WTC11 (cell line): ENCODE measurements at regions of chr17 and their contacts with region 1.

Region 1: DNA sequence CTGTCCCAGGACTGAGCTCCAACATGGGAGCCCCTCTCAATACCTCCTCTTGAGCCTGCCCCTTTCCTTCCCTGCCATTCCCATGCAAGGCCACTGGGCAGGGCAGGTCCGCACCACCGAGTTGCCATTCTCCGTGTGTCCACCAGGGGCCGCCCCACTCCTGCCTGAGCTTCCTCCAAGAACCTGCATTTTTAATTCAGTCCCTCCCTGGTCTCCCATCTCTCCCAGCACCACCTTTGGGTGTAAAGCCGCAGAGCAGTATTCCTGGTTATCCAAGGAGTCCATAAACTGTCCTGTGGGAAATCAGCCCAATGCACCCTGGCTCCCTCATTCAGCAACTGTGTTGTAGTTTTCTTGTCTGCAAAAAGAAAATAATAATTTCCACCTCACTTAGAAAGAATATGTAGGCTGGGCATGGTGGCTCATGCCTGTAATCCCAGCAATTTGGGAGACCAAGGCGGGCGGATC is 15.9 kb upstream of the ANKRD40CL start:
- DNase-seq: peak; percentile 95
- ATAC-seq: peak; percentile 99
- H3K4me3 Mint-ChIP-seq: no peak overlapping the region
- H3K27ac Mint-ChIP-seq: no peak overlapping the region
- H3K4me1 Mint-ChIP-seq: peaks cover 6% of the 10 kb centered on the region; the same call in 1 of the 2 replicates
- H3K27me3 Mint-ChIP-seq: no peaks in the 10 kb centered on the region
- CTCF ChIP-seq: peak; percentile 99

Region 2: GRCh38 chr17:50765454-50766221 is 17.6 kb before region 1 on chr17:
- CTCF ChIA-PET with region 1: interaction called, 70 read pairs
- POLR2A ChIA-PET with region 1: no interaction called
- DNase-seq: no peak
- ATAC-seq: no peak
- H3K4me3 Mint-ChIP-seq: no peak overlapping the region
- H3K27ac Mint-ChIP-seq: peak overlapping the region; percentile 33; the same call in 1 of the 2 replicates
- H3K4me1 Mint-ChIP-seq: peaks cover 16% of the 10 kb centered on the region
- H3K27me3 Mint-ChIP-seq: no peaks in the 10 kb centered on the region; the same call in 1 of the 2 replicates
- CTCF ChIP-seq: no peak

Region 3: GRCh38 chr17:50806141-50806643 is 23.0 kb after region 1 on chr17:
- CTCF ChIA-PET with region 1: interaction called, 65 read pairs
- POLR2A ChIA-PET with region 1: no interaction called
- DNase-seq: peak; percentile 56
- ATAC-seq: peak; percentile 81
- H3K4me3 Mint-ChIP-seq: no peak overlapping the region
- H3K27ac Mint-ChIP-seq: no peak overlapping the region
- H3K4me1 Mint-ChIP-seq: no peaks in the 10 kb centered on the region
- H3K27me3 Mint-ChIP-seq: no peaks in the 10 kb centered on the region
- CTCF ChIP-seq: peak; percentile 43; the same call in 1 of the 2 replicates

Region 4: DNA sequence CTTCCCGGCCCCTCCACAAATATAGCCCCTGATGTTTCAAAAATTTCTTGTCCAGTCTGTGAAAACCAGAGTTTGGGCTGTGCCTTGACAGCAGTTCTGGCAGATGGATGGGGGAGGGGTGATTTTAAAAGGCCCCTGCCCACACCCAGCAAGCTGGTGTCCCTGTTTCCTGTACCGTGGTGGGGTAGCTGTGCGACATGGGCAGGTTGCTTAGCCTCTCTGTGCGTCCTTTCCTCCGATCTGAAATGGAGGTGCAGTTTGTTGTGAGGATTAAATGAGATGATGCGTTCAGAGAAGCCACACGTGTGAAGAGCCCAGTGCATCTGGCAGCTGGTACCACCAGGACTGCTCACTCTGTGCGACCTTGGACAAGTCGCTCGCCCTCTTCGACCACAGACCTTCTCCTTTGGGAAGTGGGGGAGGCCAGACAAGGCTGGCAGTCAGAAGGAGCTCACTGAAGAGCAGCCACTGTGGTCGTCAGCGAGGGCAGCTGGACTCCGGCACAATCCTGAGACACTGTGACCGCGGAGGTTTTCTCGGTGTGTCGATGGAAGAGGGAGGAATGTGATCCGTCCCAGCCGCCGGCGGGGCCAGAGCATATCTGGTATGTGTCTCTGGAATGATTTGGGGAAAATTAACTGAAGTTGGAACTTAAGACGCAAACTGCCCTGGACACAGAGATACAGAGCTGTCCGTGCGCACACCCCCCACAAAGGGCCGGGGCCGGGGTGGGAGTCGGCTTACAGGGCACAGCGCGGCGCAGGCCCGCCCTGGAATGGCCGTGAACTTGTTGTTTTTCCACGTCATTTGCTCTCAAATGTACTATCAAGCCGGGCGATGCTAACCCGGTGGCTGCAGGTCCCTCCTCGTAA is 51.4 kb after region 1 on chr17:
- CTCF ChIA-PET with region 1: interaction called, 233 read pairs
- POLR2A ChIA-PET with region 1: no interaction called
- DNase-seq: no peak
- ATAC-seq: no peak
- H3K4me3 Mint-ChIP-seq: no peak overlapping the region
- H3K27ac Mint-ChIP-seq: 0 out of 2 replicates have a peak overlapping the region, but pooled peaks have one; percentile 15
- H3K4me1 Mint-ChIP-seq: peaks cover 44% of the 10 kb centered on the region
- H3K27me3 Mint-ChIP-seq: no peaks in the 10 kb centered on the region
- CTCF ChIP-seq: no peak

Region 5: GRCh38 chr17:50861071-50861676 is 77.9 kb after region 1 on chr17:
- CTCF ChIA-PET with region 1: interaction called, 25 read pairs
- POLR2A ChIA-PET with region 1: interaction called, 3 read pairs
- DNase-seq: no peak
- ATAC-seq: no peak
- H3K4me3 Mint-ChIP-seq: no peak overlapping the region
- H3K27ac Mint-ChIP-seq: no peak overlapping the region
- H3K4me1 Mint-ChIP-seq: peaks cover 20% of the 10 kb centered on the region
- H3K27me3 Mint-ChIP-seq: no peaks in the 10 kb centered on the region
- CTCF ChIP-seq: no peak

Region 6: GRCh38 chr17:50949989-50950881 is 167.0 kb after region 1 on chr17:
- CTCF ChIA-PET with region 1: interaction called, 85 read pairs
- POLR2A ChIA-PET with region 1: no interaction called
- DNase-seq: peak; percentile 80
- ATAC-seq: peak; percentile 79
- H3K4me3 Mint-ChIP-seq: peak overlapping the region; percentile 14; the same call in 1 of the 2 replicates
- H3K27ac Mint-ChIP-seq: peak overlapping the region; percentile 58; the same call in 1 of the 2 replicates
- H3K4me1 Mint-ChIP-seq: peaks cover 64% of the 10 kb centered on the region
- H3K27me3 Mint-ChIP-seq: no peaks in the 10 kb centered on the region
- CTCF ChIP-seq: peak; percentile 53